Activated T-helper 2 cell treated with anti-CD3 and anti-CD28 coated beads, Interferon-gamma antibody, Interleukin-2, Interleukin-4, amounts not matched to agents 10 μg/mL and 5 μg/mL and 100 μg/mL, durations not matched to agents 14 hours and 24 hours and 36 hours (primary cell): ENCODE measurements at regions of chr11 and their contacts with region 1.

Region 1: DNA sequence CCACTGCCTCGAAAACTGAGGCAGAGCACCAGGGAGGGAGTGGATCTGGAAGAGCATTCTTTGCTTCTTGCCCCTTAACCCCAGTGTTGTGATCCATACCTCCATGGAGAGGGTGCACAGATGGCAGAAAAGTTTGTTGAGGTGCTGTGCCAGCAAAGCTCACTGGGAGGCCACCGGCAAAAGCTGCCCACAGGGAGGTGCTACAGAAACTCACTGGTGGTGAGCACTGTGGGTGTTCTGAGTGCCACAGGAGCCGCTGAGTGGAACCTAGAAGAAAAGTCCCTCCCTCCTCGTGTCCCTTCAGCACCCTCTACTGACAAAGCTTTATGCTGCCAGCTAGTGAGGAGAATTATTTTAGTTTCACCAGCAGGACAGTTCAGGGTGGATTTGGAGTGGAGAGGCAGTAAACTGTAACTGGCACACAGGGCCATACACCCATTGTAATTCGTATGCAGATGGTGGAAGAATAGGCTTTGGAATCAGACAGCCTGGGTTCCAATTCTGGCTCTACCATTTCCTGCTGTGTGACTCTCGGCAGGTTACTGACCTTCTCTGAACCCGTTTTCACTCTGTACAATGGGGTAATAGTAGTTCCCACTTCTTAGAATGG is 84.6 kb downstream of the SWAP70 start:
- DNase-seq: peak; percentile 63
- H3K4me3 Mint-ChIP-seq: no peak overlapping the region
- H3K27ac Mint-ChIP-seq: no peak overlapping the region
- H3K4me1 Mint-ChIP-seq: peaks cover 18% of the 10 kb centered on the region
- H3K27me3 Mint-ChIP-seq: no peaks in the 10 kb centered on the region

Region 2: DNA sequence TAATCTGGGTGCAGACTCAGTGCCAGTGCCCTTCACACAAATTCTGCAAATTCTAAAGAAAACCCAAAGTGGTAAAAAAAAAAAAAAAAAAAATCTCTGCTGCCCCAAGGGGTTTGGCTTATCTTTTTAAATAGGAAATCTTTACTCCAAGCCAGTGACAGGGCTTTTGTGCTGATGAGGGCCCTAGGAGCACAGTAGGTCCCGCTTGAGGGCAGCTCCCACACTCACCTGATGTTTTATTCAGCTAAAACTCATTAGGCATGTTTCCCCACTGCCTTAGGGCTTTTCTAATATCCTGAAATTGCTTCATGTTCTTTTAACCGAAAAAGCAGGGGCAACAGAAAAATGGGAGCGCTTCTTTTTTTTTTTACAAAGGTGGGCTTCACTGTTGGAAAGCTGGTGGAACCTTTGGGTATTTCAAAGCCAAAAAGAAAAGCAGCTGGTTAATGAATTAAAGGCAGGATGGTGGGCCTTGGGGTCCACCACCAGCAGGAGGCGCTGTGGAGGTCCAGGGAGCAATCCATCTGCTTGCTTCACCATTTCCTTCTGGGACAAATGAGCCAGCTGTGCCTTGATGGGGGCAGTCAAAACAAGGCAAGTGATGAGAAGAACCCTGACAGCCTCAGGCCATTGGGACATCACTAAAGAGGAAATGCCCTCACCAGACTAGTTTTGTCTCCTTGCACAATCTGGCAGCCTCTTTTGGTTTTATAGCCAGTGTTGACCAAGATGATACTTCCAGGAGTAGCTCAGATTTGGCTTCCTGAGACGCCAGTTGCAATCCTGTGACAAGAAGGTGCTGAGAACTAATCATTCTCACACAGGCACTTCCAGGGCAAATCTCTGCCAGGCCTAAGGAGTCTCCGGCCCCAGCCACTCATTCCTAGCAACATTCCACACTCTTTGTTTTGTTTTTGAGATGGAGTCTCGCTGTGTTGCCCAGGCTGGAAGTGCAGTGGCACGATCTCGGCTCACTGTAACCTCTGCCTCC is 213.4 kb before region 1 on chr11:
- intact Hi-C with region 1: loop called (anchors 1 kb)
- DNase-seq: peak; percentile 57
- H3K4me3 Mint-ChIP-seq: no peak overlapping the region
- H3K27ac Mint-ChIP-seq: no peak overlapping the region
- H3K4me1 Mint-ChIP-seq: no peaks in the 10 kb centered on the region
- H3K27me3 Mint-ChIP-seq: no peaks in the 10 kb centered on the region

Region 3: GRCh38 chr11:9663699-9664275 is 84.7 kb before region 1 on chr11 and contains the start of gene SWAP70:
- intact Hi-C with region 1: loop called (anchors 5 kb)
- DNase-seq: peak; percentile 72
- H3K4me3 Mint-ChIP-seq: peak within 1 kb of the TSS; percentile 86
- H3K27ac Mint-ChIP-seq: no peak within 1 kb of the TSS
- H3K4me1 Mint-ChIP-seq: peaks cover 18% of the 10 kb centered on the region
- H3K27me3 Mint-ChIP-seq: peaks cover 37% of the 10 kb centered on the region
- total RNA-seq, gene SWAP70: 8.4 and 11.8 TPM in 2 replicates

Region 4: DNA sequence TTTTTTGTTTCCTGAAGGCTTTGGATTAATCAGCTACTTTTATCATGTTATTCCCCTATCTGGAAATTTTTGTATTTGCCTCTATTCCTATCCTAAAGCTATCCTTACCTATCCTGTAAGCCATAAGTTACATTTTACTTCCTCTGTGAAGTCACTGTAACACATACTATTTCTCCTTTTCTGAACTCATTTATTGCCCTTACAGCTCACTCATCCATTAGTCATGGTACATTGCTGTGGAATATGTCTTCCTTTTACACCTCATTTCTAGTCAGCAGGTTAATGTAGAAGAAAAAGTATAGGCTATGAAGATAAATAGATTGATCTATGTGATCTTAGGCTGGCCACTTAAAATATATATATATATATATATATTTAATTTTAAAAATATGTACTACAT is 56.6 kb before region 1 on chr11:
- intact Hi-C with region 1: no loop called
- DNase-seq: no peak
- H3K4me3 Mint-ChIP-seq: no peak overlapping the region
- H3K27ac Mint-ChIP-seq: no peak overlapping the region
- H3K4me1 Mint-ChIP-seq: peaks cover 2% of the 10 kb centered on the region
- H3K27me3 Mint-ChIP-seq: peaks cover 1% of the 10 kb centered on the region